Mammary epithelial cell (primary cell): ENCODE measurements at regions of chr19 and their contacts with region 1.

Region 1: DNA sequence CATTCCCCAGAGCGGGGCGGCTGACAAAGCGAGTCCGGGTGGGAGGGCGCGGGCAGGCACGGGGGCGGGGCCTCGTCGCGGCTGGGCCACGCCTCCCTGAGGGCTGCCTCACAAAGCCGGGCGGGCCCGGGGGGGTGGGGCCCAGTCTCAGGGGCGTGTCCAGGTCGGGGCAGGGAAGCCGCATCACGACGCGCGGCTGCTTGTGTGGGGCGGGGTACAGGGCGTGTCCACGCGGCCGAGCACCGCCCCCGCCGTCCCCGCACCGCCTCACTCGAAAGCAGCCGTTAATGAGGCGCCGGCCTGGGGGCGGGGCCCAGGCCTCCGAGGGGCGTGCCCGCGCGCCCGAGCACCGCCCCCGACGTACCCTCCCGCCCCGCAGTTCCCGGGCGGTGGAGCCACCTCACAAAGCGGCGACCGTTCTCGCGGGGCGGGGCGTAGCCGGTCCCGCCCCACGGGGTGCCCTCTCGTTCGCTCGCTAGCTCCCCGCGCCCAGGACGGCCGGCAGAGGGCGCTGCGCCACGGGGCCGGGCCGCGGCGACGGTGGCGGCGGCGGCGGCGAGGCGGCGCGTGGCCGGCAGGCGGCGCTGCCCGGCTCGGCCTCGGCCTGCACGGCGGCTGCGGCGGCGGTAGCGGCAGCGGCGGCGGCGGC is at the start of gene CARM1:
- DNase-seq: peak; percentile 97
- H3K4me3 ChIP-seq: peak within 1 kb of the TSS; percentile 78 to 90 (median 85)
- H3K27ac ChIP-seq: peak within 1 kb of the TSS; percentile 51
- H3K4me1 ChIP-seq: peaks cover 4% of the 10 kb centered on the region
- H3K27me3 ChIP-seq: no peaks in the 10 kb centered on the region
- CTCF ChIP-seq: peak; percentile 49 to 60
- total RNA-seq, gene CARM1: 29.2 to 58.5 TPM

Region 2: GRCh38 chr19:10891405-10892086 is 20.5 kb after region 1 on chr19:
- CTCF ChIA-PET with region 1: no interaction called
- dilution Hi-C with region 1: no loop called
- in situ Hi-C with region 1: no loop called
- intact Hi-C with region 1: loop called (anchors 1 kb)
- DNase-seq: peak; percentile 76
- H3K4me3 ChIP-seq: peak overlapping the region in 1 of 3 experiments; percentile 7
- H3K27ac ChIP-seq: peak overlapping the region; percentile 50
- H3K4me1 ChIP-seq: peaks cover 31% of the 10 kb centered on the region
- H3K27me3 ChIP-seq: no peaks in the 10 kb centered on the region
- CTCF ChIP-seq: no peak

Region 3: GRCh38 chr19:10998045-10998533 is 127.0 kb after region 1 on chr19:
- CTCF ChIA-PET with region 1: no interaction called
- dilution Hi-C with region 1: no loop called
- in situ Hi-C with region 1: no loop called
- intact Hi-C with region 1: no loop called
- DNase-seq: no peak
- H3K4me3 ChIP-seq: no peak overlapping the region
- H3K27ac ChIP-seq: no peak overlapping the region
- H3K4me1 ChIP-seq: no peaks in the 10 kb centered on the region
- H3K27me3 ChIP-seq: no peaks in the 10 kb centered on the region
- CTCF ChIP-seq: no peak